SK-N-SH (cell line): ENCODE measurements at regions of chr5 and their contacts with region 1.

Region 1: GRCh38 chr5:168843277-168844015 is 264.3 kb upstream of the PANK3 start:
- DNase-seq: no peak
- H3K4me3 ChIP-seq: peak overlapping the region in 1 of 2 experiments; percentile 48; a peak in 2 of 4 replicates
- H3K27ac ChIP-seq: peak overlapping the region in 1 of 2 experiments; percentile 96; a peak in 2 of 4 replicates
- H3K4me1 ChIP-seq: peaks cover 0 to 34% of the 10 kb centered on the region in 2 experiments; a peak in 2 of 4 replicates
- H3K27me3 ChIP-seq: no peaks in the 10 kb centered on the region
- CTCF ChIP-seq: no peak
- EP300 ChIP-seq: no peak
- RAD21 ChIP-seq: no peak

Region 2: GRCh38 chr5:168592014-168592418 is 251.4 kb before region 1 on chr5:
- CTCF ChIA-PET with region 1: no interaction called
- POLR2A ChIA-PET with region 1: no interaction called
- DNase-seq: no peak
- H3K4me3 ChIP-seq: no peak overlapping the region
- H3K27ac ChIP-seq: no peak overlapping the region
- H3K4me1 ChIP-seq: peaks cover 0 to 7% of the 10 kb centered on the region in 2 experiments; a peak in 1 of 4 replicates
- H3K27me3 ChIP-seq: no peaks in the 10 kb centered on the region
- CTCF ChIP-seq: no peak
- EP300 ChIP-seq: no peak
- RAD21 ChIP-seq: no peak

Region 3: DNA sequence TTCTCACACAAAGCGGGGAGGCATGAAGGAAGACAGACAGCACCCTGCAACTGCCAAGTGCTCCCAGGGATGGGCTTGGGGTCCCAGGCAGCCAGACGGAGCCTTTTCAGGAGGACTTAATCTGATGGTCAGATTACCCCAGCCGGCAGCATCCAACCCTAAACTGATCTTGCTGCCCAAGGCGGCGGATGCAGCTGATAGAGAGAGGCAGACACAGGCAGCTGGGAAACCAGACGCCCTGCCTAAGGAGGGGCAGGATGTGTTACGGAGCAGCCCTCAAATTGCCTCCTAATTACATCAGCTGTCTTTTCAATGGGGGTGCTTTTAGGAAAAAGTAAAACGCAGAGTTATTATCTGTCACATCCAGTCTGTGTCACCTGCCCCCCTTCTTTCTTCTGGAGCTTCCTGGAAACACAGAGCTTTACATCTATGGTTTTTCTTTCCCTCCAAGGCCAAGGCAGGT is 73.4 kb before region 1 on chr5:
- CTCF ChIA-PET with region 1: no interaction called
- POLR2A ChIA-PET with region 1: interaction called, 37 read pairs
- DNase-seq: peak; percentile 87
- H3K4me3 ChIP-seq: no peak overlapping the region
- H3K27ac ChIP-seq: peak overlapping the region in 1 of 2 experiments; percentile 100; a peak in 2 of 4 replicates
- H3K4me1 ChIP-seq: peaks cover 15 to 89% of the 10 kb centered on the region in 2 experiments; a peak in 3 of 4 replicates
- H3K27me3 ChIP-seq: no peaks in the 10 kb centered on the region
- CTCF ChIP-seq: no peak
- EP300 ChIP-seq: peak; percentile 49 to 100; a peak in 3 of 4 replicates
- RAD21 ChIP-seq: 0 out of 2 replicates have a peak, but pooled peaks have one; percentile 18

Region 4: GRCh38 chr5:168793841-168794837 is 49.3 kb before region 1 on chr5:
- CTCF ChIA-PET with region 1: no interaction called
- POLR2A ChIA-PET with region 1: no interaction called
- DNase-seq: no peak
- H3K4me3 ChIP-seq: no peak overlapping the region
- H3K27ac ChIP-seq: peak overlapping the region; percentile 47 to 76
- H3K4me1 ChIP-seq: peaks cover 0 to 81% of the 10 kb centered on the region in 2 experiments; a peak in 2 of 4 replicates
- H3K27me3 ChIP-seq: no peaks in the 10 kb centered on the region
- CTCF ChIP-seq: no peak
- EP300 ChIP-seq: no peak
- RAD21 ChIP-seq: no peak

Region 5: GRCh38 chr5:168813184-168813968 is 30.1 kb before region 1 on chr5:
- CTCF ChIA-PET with region 1: interaction called, 3 read pairs
- POLR2A ChIA-PET with region 1: interaction called, 11 read pairs
- DNase-seq: peak; percentile 73
- H3K4me3 ChIP-seq: no peak overlapping the region
- H3K27ac ChIP-seq: peak overlapping the region; percentile 19 to 99; a peak in 3 of 4 replicates
- H3K4me1 ChIP-seq: peaks cover 0 to 80% of the 10 kb centered on the region in 2 experiments; a peak in 2 of 4 replicates
- H3K27me3 ChIP-seq: no peaks in the 10 kb centered on the region
- CTCF ChIP-seq: no peak
- EP300 ChIP-seq: peak; percentile 43 to 99; a peak in 3 of 4 replicates
- RAD21 ChIP-seq: peak; percentile 17

Region 6: DNA sequence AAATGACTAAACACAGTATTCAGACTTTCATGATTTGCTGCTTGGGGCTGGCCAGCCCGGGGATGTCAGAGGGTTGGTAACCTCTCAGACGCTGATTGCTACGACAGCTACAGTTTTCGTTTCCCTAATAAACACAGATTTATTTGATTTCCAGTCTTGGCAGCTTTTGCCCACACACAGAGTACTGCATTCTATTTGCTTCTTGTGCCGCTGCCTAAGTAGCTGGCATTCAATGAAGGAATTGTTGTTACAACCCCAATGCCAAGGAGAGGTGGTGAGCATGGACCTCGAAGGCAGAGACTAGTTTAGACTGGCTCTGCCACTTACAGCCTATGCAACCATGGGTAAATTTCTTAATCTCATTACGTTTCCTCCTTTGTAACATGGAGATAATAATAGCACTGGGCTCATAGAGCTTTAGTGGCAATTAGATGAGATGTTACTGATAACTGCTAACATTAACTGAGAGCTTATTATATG is 17.2 kb before region 1 on chr5:
- CTCF ChIA-PET with region 1: interaction called, 6 read pairs
- POLR2A ChIA-PET with region 1: interaction called, 14 read pairs
- DNase-seq: peak; percentile 41
- H3K4me3 ChIP-seq: no peak overlapping the region
- H3K27ac ChIP-seq: peak overlapping the region in 1 of 2 experiments; percentile 87; a peak in 2 of 4 replicates
- H3K4me1 ChIP-seq: peaks cover 0 to 95% of the 10 kb centered on the region in 2 experiments; a peak in 3 of 4 replicates
- H3K27me3 ChIP-seq: no peaks in the 10 kb centered on the region
- CTCF ChIP-seq: no peak
- EP300 ChIP-seq: peak in 1 of 2 experiments; percentile 81; a peak in 2 of 4 replicates
- RAD21 ChIP-seq: peak; percentile 24

Region 7: DNA sequence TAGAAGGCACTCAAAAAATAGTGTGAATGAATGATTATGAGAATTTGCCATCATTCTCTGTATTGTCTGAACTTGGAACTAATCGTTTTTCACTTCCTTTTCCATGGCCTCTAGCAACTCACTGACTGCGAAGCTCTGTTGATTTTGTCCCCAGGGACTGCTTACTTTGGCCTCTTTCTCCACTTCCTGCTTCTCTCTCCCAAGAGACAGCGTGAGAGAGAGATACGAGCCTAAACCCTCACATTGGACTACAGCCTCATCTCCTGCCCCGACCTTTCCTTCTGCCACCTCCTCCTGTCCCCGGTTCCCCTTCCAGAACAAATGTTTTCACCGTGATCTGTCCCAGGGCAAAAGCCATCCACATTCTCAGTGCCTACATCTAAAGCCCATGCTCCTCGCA is 36.5 kb after region 1 on chr5:
- CTCF ChIA-PET with region 1: interaction called, 45 read pairs
- POLR2A ChIA-PET with region 1: interaction called, 190 read pairs
- DNase-seq: no peak
- H3K4me3 ChIP-seq: peak overlapping the region in 1 of 2 experiments; percentile 45; a peak in 2 of 4 replicates
- H3K27ac ChIP-seq: peak overlapping the region; percentile 58 to 100; a peak in 3 of 4 replicates
- H3K4me1 ChIP-seq: peaks cover 12 to 68% of the 10 kb centered on the region in 2 experiments; a peak in 3 of 4 replicates
- H3K27me3 ChIP-seq: no peaks in the 10 kb centered on the region
- CTCF ChIP-seq: no peak
- EP300 ChIP-seq: no peak
- RAD21 ChIP-seq: no peak

Region 8: GRCh38 chr5:168885324-168886120 is 42.1 kb after region 1 on chr5:
- CTCF ChIA-PET with region 1: interaction called, 45 read pairs
- POLR2A ChIA-PET with region 1: interaction called, 190 read pairs
- DNase-seq: peak; percentile 67
- H3K4me3 ChIP-seq: no peak overlapping the region
- H3K27ac ChIP-seq: peak overlapping the region; percentile 49 to 100; a peak in 3 of 4 replicates
- H3K4me1 ChIP-seq: peaks cover 13 to 68% of the 10 kb centered on the region in 2 experiments
- H3K27me3 ChIP-seq: no peaks in the 10 kb centered on the region
- CTCF ChIP-seq: no peak
- EP300 ChIP-seq: peak in 1 of 2 experiments; percentile 99; a peak in 3 of 4 replicates
- RAD21 ChIP-seq: peak; percentile 40

Region 9: DNA sequence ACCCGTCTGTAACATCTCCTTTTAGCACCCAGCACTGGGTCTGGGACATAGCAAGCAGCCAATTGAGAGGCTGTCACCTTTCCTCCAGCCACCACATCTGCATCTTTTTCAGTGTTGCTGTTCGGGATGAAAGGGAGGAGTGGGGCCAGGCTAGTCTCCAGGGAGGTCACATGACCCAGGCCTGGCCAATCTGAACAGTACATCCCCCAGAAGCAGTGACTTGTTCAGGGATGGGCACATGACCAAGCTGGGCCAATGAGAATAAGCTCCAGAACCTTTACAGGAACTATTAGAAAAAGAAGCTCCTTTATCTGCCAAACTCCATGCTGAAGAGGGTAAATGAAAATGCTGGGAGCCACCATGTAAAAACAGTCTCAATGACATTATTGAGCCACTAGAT is 98.5 kb after region 1 on chr5:
- CTCF ChIA-PET with region 1: interaction called, 6 read pairs
- POLR2A ChIA-PET with region 1: interaction called, 13 read pairs
- DNase-seq: peak; percentile 44
- H3K4me3 ChIP-seq: no peak overlapping the region
- H3K27ac ChIP-seq: peak overlapping the region in 1 of 2 experiments; percentile 98; a peak in 2 of 4 replicates
- H3K4me1 ChIP-seq: peaks cover 0 to 66% of the 10 kb centered on the region in 2 experiments; a peak in 2 of 4 replicates
- H3K27me3 ChIP-seq: no peaks in the 10 kb centered on the region
- CTCF ChIP-seq: no peak
- EP300 ChIP-seq: no peak
- RAD21 ChIP-seq: no peak

Region 10: GRCh38 chr5:169161022-169161680 is 317.7 kb after region 1 on chr5:
- CTCF ChIA-PET with region 1: no interaction called
- POLR2A ChIA-PET with region 1: no interaction called
- DNase-seq: peak; percentile 25
- H3K4me3 ChIP-seq: no peak overlapping the region
- H3K27ac ChIP-seq: peak overlapping the region; percentile 90 to 97
- H3K4me1 ChIP-seq: peaks cover 33 to 37% of the 10 kb centered on the region in 2 experiments
- H3K27me3 ChIP-seq: no peaks in the 10 kb centered on the region
- CTCF ChIP-seq: no peak
- EP300 ChIP-seq: peak; percentile 44 to 93; a peak in 3 of 4 replicates
- RAD21 ChIP-seq: no peak